Sigmoid colon (tissue), 7 donors: ENCODE measurements at regions of chr12 and their contacts with region 1.

Region 1: DNA sequence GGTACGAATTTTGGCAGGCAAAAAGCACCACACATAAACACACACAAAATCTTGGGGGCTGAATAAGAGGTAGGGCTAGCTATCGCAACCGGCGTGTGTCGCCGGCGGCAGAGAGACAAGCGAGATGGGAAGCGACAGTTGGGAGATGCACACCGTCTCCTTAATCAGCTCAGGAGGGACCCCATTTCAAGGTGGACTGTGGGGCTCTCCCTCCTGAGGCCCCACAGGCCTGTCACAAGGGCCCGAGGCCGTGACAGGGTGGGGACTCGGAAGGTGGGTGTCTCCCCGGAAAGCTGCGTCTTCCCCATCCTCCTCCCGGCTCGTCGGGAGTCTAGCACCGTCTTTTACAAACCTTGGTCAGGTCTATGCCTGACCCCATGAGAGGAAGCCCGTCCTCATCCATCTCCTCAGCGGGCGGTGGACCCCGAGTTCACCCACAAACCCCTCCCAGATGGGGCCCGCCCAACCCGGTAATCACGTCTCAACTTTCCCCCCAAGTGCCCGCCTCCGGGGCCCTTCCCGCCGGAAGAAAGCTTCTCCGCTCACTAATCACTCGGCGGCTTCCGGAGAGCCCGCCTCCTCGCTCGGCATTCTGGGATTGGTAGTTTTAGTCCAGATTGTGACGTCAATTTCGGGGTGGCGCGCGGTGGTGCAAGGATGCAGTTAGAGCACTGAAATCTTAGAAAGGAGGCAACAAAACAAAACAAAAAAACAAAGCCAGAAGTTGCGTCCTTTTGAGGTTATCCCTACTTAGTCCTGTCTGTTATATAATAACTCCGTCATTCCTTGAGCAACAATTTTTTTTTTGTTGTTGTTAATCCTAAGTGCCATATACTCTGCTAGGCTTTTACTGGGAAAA is at the start of gene WASHC3:
- DNase-seq: peak; percentile 98
- H3K4me3 ChIP-seq: peak within 1 kb of the TSS; percentile 84 to 92 (median 88)
- H3K27ac ChIP-seq: peak within 1 kb of the TSS; percentile 90 to 93 (median 91)
- H3K4me1 ChIP-seq: peaks cover 0 to 9% (median 6%) of the 10 kb centered on the region in 4 donors
- H3K27me3 ChIP-seq: no peaks in the 10 kb centered on the region
- CTCF ChIP-seq: no peak
- EP300 ChIP-seq: no peak
- POLR2A ChIP-seq: peak; percentile 73 to 74
- total RNA-seq, gene WASHC3: 90.0 to 115 (median 95.6) TPM

Region 2: DNA sequence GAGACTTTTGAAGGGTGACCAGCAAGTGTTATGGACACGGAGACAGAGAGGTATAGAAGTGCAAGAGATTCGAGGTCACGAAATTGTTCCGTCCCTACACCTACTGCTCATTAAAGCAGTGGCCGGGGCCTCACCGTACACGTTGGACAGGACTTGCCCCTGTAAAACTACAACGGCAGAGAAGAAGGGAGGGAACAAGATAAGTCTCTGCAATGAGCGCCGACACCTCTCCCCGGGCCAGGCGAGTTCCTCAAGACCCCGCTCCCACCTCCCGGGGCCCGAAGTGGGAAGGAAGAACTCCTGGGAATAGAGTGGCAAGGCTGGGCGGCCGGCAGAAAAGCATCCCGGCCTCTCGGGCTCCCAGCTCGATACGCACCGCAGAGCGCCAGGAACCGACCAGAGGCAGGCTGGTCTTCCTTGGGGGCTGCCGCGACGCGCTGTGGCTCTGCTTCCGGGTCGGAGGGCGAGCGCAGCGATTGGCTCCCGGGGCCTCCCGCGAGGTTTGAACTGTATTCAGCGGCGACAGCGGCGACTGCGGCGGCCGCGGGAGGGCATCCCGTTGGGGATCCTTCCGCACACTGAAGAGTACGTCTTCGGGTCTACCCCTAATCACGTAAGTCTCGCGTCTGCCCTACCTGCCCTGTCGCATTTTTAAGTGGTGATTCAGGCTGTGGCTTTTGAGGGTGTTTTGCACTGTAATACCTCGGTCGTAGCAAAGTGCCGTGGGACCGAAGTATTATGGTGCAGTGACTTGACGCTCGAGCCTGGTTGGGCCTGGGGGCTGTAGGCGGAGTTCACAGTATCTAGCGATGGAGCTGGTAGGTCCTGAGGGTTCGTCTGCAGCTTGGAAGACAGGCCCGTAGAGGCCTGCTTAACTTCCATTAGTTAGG is 58.1 kb after region 1 on chr12 and contains the starts of genes NUP37 and PARPBP:
- intact Hi-C with region 1: loop called (anchors 5 kb)
- DNase-seq: peak; percentile 94
- H3K4me3 ChIP-seq: peak within 1 kb of the TSS; percentile 65 to 76 (median 72)
- H3K27ac ChIP-seq: peak within 1 kb of the TSS; percentile 85 to 89 (median 88)
- H3K4me1 ChIP-seq: peaks cover 0 to 21% (median 14%) of the 10 kb centered on the region in 4 donors
- H3K27me3 ChIP-seq: no peaks in the 10 kb centered on the region
- CTCF ChIP-seq: no peak
- EP300 ChIP-seq: no peak
- POLR2A ChIP-seq: peak; percentile 44 to 47
- total RNA-seq, gene NUP37: 16.1 to 24.3 (median 18.6) TPM
- total RNA-seq, gene PARPBP: 1.8 to 2.3 (median 1.9) TPM

Region 3: DNA sequence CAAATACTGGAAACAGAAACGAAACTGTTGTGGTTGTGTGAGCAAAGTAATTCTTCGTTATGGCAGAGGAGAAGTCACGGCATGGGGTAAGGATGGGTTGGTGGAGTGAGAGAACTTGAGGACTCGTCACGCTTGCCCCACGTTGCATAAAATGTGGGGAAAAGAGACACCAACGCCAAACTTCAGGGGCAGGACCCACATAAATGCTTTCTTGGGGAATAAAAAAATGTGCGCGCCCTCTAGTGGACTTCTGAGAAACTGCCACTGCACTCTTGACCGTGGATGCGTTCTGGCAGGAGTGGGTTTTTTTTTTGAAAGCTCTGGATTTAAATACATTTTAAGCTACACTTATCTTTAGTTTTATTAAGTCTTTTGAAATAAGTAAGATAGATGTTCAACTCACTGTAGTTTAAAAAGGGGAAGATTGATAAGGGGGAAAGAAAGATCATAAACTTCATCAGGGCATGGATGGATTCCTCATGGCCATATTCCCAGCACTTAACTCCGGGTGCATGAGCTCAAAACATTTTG is 422.7 kb after region 1 on chr12:
- intact Hi-C with region 1: loop called (anchors 10 kb)
- DNase-seq: peak; percentile 76
- H3K4me3 ChIP-seq: peak overlapping the region in 1 of 4 donors; percentile 18
- H3K27ac ChIP-seq: peak overlapping the region in 2 of 4 donors; percentile 41 to 47
- H3K4me1 ChIP-seq: peaks cover 0 to 25% (median 13%) of the 10 kb centered on the region in 4 donors
- H3K27me3 ChIP-seq: no peaks in the 10 kb centered on the region
- CTCF ChIP-seq: peak; percentile 43 to 91 (median 56)
- EP300 ChIP-seq: no peak
- POLR2A ChIP-seq: no peak